Activated CD8-positive, alpha-beta memory T cell treated with anti-CD3 and anti-CD28 coated beads, Interleukin-2, amount 10 ng/mL, durations not matched to agents 7 days and 5 days (primary cell): ENCODE measurements at regions of chr12 and their contacts with region 1.

Region 1: DNA sequence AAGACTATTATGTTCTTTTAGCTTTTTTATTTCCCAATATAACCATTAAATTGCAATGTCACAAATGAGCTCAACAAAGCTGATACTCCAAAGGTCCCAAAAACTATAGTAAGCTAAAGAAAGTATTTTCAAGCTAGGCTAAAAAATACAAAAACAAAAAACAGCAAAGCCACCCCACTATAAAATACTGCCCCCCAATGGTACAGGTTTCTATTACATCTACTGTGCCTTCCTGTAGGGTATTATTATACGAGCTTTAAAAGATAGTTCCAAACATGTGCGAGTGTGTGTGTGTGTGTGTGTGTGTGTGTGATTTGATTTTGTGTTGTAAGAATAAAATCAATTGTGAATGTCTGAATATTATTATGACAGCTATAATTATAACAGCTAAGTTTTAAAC is 1.1 kb downstream of the IFNG start:
- DNase-seq: no peak
- ATAC-seq: peak; percentile 10
- H3K4me3 Mint-ChIP-seq: peak overlapping the region; percentile 88
- H3K27ac Mint-ChIP-seq: peak overlapping the region; percentile 70
- H3K4me1 Mint-ChIP-seq: peaks cover 68% of the 10 kb centered on the region
- H3K27me3 Mint-ChIP-seq: no peaks in the 10 kb centered on the region

Region 2: GRCh38 chr12:68001486-68002466 is 156.7 kb before region 1 on chr12:
- CTCF ChIA-PET with region 1: interaction called, 20 read pairs
- DNase-seq: no peak
- ATAC-seq: peak; percentile 23
- H3K4me3 Mint-ChIP-seq: no peak overlapping the region
- H3K27ac Mint-ChIP-seq: no peak overlapping the region
- H3K4me1 Mint-ChIP-seq: peaks cover 19% of the 10 kb centered on the region
- H3K27me3 Mint-ChIP-seq: no peaks in the 10 kb centered on the region

Region 3: GRCh38 chr12:68102731-68103130 is 55.7 kb before region 1 on chr12:
- CTCF ChIA-PET with region 1: interaction called, 21 read pairs
- DNase-seq: no peak
- ATAC-seq: no peak
- H3K4me3 Mint-ChIP-seq: no peak overlapping the region
- H3K27ac Mint-ChIP-seq: no peak overlapping the region
- H3K4me1 Mint-ChIP-seq: no peaks in the 10 kb centered on the region
- H3K27me3 Mint-ChIP-seq: peaks cover 2% of the 10 kb centered on the region

Region 4: DNA sequence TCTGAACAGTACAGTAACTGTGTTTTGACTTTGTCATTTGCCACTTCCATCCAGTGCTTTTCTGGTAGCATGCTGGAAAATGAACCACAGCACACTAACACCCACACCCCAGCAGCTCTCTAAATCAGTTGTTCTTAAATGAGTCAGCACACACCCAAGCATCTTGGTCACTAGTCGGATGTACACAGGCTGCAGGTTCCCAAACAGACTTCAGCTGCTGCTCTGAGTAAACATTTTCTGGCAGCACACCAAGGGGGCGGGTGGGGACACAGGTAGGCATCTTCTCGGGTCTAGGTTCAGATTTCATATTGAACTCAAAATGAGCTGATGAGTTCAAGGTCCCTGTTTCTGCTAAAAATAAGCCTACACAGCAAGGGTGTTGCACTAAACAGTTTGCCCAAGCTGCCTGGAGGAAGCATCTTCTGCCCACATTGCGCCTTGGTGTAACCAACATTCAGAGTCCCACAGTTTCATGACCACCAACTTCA is 38.7 kb before region 1 on chr12:
- CTCF ChIA-PET with region 1: interaction called, 207 read pairs
- DNase-seq: peak; percentile 92
- ATAC-seq: peak; percentile 86
- H3K4me3 Mint-ChIP-seq: peak overlapping the region; percentile 54
- H3K27ac Mint-ChIP-seq: no peak overlapping the region
- H3K4me1 Mint-ChIP-seq: peaks cover 35% of the 10 kb centered on the region
- H3K27me3 Mint-ChIP-seq: no peaks in the 10 kb centered on the region

Region 5: GRCh38 chr12:68180792-68181744 is 22.6 kb after region 1 on chr12:
- CTCF ChIA-PET with region 1: interaction called, 11 read pairs
- DNase-seq: peak; percentile 80
- ATAC-seq: peak; percentile 91
- H3K4me3 Mint-ChIP-seq: peak overlapping the region; percentile 12
- H3K27ac Mint-ChIP-seq: peak overlapping the region; percentile 79
- H3K4me1 Mint-ChIP-seq: peaks cover 55% of the 10 kb centered on the region
- H3K27me3 Mint-ChIP-seq: peaks cover 5% of the 10 kb centered on the region

Region 6: DNA sequence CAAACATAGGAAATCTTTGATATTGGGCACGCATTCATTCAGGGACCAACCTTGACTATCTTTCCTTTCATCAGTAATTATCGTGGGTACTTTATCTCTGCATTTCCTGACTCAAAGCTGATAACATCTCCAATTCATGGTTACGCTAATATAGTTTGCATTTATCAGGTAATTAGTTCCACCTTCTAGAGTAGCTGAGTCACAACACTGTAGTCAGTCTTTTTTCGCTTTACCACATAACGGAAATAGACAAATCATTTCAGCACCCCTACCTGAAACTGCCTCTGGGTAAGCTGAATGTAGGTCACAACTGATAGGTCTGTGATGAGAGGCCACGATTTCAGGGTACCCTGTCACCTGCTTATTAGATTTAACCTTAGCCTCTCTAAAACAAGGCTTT is 131.7 kb after region 1 on chr12:
- CTCF ChIA-PET with region 1: no interaction called
- DNase-seq: peak; percentile 73
- ATAC-seq: peak; percentile 100
- H3K4me3 Mint-ChIP-seq: no peak overlapping the region
- H3K27ac Mint-ChIP-seq: peak overlapping the region; percentile 16
- H3K4me1 Mint-ChIP-seq: peaks cover 36% of the 10 kb centered on the region
- H3K27me3 Mint-ChIP-seq: peaks cover 7% of the 10 kb centered on the region

Region 7: DNA sequence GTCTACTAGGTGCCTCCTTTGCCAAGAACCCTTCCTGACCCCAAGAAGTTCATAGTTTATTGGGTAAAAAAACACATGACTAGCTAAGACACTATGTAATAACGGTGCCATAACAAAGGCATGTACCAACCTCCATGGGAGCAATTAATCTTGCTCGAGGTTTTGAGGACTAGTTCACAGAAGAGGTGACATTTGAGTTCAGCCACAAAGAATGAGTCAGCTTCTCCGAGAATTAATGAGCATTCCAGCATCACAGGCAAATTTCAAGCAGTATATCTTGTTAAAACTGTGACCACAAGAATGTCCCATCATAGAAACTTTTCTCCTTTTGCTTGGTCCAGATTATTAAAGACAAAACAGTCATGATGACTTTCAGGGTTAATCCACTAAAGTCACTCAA is 339.3 kb after region 1 on chr12:
- CTCF ChIA-PET with region 1: no interaction called
- DNase-seq: peak; percentile 49
- ATAC-seq: peak; percentile 85
- H3K4me3 Mint-ChIP-seq: peak overlapping the region; percentile 58
- H3K27ac Mint-ChIP-seq: peak overlapping the region; percentile 86
- H3K4me1 Mint-ChIP-seq: peaks cover 30% of the 10 kb centered on the region
- H3K27me3 Mint-ChIP-seq: no peaks in the 10 kb centered on the region